ENCODE measurements at regions of chrX and their contacts with region 1.

Region 1: DNA sequence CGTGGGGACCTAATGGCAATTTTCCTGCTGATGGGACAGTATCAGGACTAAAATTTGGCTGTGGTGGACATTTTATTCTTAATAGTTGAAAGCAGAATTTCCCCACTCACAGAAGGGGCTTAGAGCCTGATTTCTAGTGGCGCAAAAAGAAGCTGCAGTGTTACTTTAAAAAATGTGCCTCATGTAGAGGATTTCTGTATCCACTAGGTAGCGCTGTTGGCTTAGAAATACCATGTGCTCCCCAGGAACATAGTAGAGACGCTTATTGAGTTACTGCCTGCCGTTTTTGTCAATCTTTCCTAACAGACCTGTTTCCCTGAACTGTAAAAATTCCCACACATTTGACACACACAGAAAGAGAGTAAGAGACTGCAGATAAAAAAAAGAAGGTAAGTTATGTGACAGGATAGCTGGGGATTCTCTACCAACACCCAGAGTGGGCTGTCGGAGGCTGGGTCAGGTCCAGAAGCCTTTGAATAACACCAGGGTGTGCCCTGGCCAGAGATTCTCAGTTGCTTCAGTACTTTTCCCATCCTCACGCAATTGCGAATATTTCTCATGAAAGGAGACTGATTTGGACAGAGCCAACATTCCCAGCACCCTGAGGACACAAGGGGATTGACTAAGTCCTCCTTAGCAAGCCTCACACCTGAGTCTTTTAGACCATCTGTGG is 88.4 kb downstream of the ZXDA start:
- DNase-seq: peak; percentile 20
- H3K4me3 Mint-ChIP-seq: peak overlapping the region; percentile 35
- H3K27ac Mint-ChIP-seq: no peak overlapping the region
- H3K4me1 Mint-ChIP-seq: no peaks in the 10 kb centered on the region
- H3K27me3 Mint-ChIP-seq: peaks cover 22% of the 10 kb centered on the region
- CTCF ChIP-seq: peak; percentile 45

Region 2: DNA sequence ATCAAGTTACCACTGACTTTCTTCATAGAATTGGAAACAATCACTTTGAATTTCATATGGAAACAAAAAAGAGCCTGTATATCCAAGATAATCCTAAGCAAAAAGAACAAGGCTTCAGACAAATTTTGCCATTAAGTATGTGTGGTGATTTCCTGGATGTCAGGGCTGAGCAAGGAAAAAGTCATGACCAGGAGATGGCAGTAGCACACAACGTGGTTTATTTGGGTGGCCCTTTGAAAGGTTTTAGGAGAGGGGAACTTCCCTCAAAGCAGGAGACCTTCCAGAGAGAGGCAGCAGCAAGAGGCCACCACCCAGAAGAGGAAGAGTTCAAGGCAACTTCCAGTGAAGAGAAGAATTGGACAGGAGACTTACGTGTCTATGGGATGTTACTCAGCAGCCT is 248.1 kb before region 1 on chrX:
- CTCF ChIA-PET with region 1: no interaction called
- intact Hi-C with region 1: loop called (anchors 5 kb)
- DNase-seq: peak; percentile 17
- H3K4me3 Mint-ChIP-seq: no peak overlapping the region
- H3K27ac Mint-ChIP-seq: no peak overlapping the region
- H3K4me1 Mint-ChIP-seq: no peaks in the 10 kb centered on the region
- H3K27me3 Mint-ChIP-seq: peaks cover 18% of the 10 kb centered on the region
- CTCF ChIP-seq: peak; percentile 12

Region 3: GRCh38 chrX:57677132-57677858 is 144.5 kb before region 1 on chrX:
- CTCF ChIA-PET with region 1: no interaction called
- intact Hi-C with region 1: no loop called
- DNase-seq: no peak
- H3K4me3 Mint-ChIP-seq: no peak overlapping the region
- H3K27ac Mint-ChIP-seq: no peak overlapping the region
- H3K4me1 Mint-ChIP-seq: no peaks in the 10 kb centered on the region
- H3K27me3 Mint-ChIP-seq: no peaks in the 10 kb centered on the region
- CTCF ChIP-seq: no peak

Region 4: DNA sequence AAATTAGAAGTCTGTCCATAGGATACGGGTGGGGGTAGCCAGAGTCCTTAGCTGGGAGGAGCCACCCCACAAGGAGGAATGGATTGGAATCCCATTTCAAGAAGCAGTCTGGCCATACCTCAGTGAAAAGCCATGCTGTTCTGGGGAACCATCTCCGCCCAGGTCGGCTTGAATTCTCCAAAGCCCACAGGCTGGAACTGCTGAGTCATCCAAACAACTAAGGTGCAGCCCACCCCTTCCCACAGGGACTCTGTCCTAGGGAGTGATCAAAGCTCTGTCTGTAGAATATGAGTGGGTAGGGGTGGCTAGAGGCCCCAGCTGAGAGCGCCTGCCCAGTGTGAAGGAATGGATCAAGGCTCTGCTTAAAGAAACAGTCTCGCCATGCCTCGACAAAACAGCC is 49.6 kb after region 1 on chrX:
- CTCF ChIA-PET with region 1: no interaction called
- intact Hi-C with region 1: no loop called
- DNase-seq: no peak
- H3K4me3 Mint-ChIP-seq: no peak overlapping the region
- H3K27ac Mint-ChIP-seq: no peak overlapping the region
- H3K4me1 Mint-ChIP-seq: no peaks in the 10 kb centered on the region
- H3K27me3 Mint-ChIP-seq: no peaks in the 10 kb centered on the region
- CTCF ChIP-seq: no peak

Region 5: DNA sequence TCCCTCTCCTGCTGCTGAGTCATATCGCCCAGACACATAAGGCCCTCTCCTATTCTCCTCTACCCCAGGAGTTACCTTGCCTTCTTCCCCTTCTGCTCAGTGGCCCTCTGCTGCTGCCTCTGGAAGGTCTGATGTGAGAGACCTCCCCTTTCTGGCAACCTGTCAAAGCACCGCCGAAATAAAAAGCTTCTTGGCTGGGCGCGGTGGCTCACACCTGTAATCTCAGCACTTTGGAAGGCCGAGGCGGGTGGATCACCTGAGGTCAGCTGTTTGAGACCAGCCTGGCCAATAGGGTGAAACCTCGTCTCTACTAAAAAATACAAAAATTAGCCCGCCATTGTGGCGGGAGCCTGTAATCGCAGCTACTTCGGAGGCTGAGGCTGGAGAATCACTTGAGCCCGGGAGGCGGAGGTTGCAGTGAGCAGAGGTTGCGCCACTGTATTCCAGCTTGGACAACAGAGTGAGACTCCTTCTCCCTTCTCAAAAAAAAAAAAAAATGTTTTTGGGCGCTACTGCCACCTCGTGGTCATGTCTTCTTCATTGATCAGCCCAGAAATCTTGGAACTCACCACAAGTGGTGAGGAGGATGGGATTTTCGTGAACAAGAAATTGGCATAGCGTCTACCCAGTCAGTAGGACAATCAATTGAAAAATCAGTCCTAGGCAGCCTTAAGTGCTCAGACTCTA is 97.1 kb after region 1 on chrX:
- CTCF ChIA-PET with region 1: interaction called, 4 read pairs
- intact Hi-C with region 1: loop called (anchors 2 kb)
- DNase-seq: peak; percentile 60
- H3K4me3 Mint-ChIP-seq: peak overlapping the region; percentile 18
- H3K27ac Mint-ChIP-seq: no peak overlapping the region
- H3K4me1 Mint-ChIP-seq: no peaks in the 10 kb centered on the region
- H3K27me3 Mint-ChIP-seq: peaks cover 44% of the 10 kb centered on the region
- CTCF ChIP-seq: peak; percentile 21

Region 6: DNA sequence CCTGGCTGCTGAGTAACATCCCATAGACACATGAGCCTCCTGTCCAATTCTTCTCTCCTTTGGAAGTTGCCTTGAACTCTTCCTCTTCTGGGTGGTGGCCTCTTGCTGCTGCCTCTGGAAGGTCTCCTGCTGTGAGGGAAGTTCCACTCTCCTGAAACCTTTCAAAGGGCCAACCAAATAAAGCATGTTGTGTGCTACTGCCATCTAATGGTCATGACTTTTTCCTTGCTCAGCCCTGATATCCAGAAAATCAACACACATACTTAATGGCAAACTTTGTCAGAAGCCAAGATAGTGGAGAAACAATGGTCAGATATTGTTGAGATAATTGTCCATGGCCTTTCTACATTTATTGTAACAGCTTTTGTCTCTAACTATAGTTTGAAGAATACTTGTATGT is 107.5 kb after region 1 on chrX:
- CTCF ChIA-PET with region 1: no interaction called
- intact Hi-C with region 1: loop called (anchors 2 kb)
- DNase-seq: no peak
- H3K4me3 Mint-ChIP-seq: no peak overlapping the region
- H3K27ac Mint-ChIP-seq: no peak overlapping the region
- H3K4me1 Mint-ChIP-seq: no peaks in the 10 kb centered on the region
- H3K27me3 Mint-ChIP-seq: no peaks in the 10 kb centered on the region
- CTCF ChIP-seq: no peak

Region 7: DNA sequence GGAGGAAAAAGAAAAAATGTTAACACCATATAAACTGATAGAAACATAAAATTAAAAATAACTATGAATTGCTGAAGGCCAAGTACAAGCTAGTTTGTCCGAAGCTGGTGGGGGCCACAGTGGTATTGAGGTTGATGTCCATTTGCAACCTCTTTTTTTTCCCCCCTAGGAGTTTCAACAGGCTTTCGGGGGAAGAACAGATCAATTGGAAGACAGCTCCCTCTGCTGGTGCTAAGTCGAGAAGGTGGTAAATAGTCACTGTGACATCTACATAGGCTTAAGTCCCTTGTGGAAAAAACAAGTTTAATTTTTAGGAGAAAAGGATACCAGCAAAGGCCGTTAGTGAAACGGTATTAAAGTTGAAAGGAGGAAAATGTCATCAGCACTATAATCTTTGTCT is 204.1 kb after region 1 on chrX:
- CTCF ChIA-PET with region 1: no interaction called
- intact Hi-C with region 1: loop called (anchors 2 kb)
- DNase-seq: peak; percentile 4
- H3K4me3 Mint-ChIP-seq: no peak overlapping the region
- H3K27ac Mint-ChIP-seq: no peak overlapping the region
- H3K4me1 Mint-ChIP-seq: no peaks in the 10 kb centered on the region
- H3K27me3 Mint-ChIP-seq: no peaks in the 10 kb centered on the region
- CTCF ChIP-seq: no peak

Measured in Calu3 (cell line).